Colonic mucosa (tissue), 4 donors: ENCODE measurements at regions of chr11 and their contacts with region 1.

Region 1: GRCh38 chr11:126268708-126269579 is at the starts of genes FOXRED1 and SRPRA:
- DNase-seq: peak; percentile 100
- H3K4me3 ChIP-seq: peak within 1 kb of the TSS; percentile 72
- H3K27ac ChIP-seq: peak within 1 kb of the TSS; percentile 85
- H3K4me1 ChIP-seq: peaks cover 5% of the 10 kb centered on the region
- H3K27me3 ChIP-seq: no peaks in the 10 kb centered on the region
- CTCF ChIP-seq: no peak
- total RNA-seq, gene FOXRED1: 19.9 to 63.4 TPM
- total RNA-seq, gene SRPRA: 75.8 to 102 TPM

Region 2: GRCh38 chr11:125842321-125842948 is 426.5 kb before region 1 on chr11:
- intact Hi-C with region 1: no loop called
- DNase-seq: no peak
- H3K4me3 ChIP-seq: no peak overlapping the region
- H3K27ac ChIP-seq: no peak overlapping the region
- H3K4me1 ChIP-seq: no peaks in the 10 kb centered on the region
- H3K27me3 ChIP-seq: no peaks in the 10 kb centered on the region
- CTCF ChIP-seq: no peak

Region 3: DNA sequence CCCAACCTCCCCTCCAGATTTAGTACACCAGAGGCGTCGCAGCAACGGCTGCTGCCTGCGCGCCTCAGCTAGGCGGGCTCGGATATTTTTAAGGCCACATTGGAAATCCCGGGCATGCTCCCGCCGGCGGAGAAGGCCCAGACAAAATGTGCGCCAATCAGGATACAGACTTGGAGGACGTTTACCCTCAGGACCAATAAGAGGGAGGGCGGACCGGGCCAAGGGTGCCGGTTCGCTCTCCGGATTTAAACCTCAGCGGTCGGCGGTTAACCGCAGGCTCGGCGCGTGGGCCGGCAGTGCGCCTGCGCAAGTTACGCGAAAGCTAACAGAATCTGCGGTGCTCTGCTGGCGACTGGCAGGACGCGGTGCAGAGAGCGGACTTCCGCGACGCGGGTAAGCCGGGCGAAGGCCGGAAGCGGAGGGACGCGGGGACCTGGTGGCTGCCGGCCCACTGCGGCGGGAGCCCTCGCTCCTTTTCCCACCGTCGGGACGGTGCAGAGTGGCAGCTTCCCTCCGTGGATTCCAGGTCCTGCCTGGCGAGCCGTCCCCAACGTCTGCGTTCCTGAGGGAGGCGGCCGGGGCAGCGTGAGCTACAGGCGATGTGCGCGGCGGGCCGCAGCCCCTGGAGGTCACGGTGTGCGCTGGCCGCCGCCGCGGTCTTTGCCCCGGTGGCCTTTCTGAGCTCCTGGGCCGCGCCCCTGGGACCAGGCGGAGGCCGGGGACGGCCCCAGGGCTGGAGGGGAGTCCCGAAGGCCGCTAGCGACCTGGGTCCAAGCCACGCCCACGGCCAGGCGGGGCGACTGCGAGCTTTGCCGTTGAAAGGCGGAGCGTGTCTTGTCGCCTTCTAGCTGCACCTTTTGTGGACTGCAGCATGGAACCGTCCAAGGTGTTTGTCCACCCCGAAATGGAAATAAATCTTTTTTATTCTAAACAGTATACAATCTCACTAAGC is 381.3 kb before region 1 on chr11 and contains the start of gene HYLS1:
- intact Hi-C with region 1: no loop called
- DNase-seq: peak; percentile 93
- H3K4me3 ChIP-seq: peak within 1 kb of the TSS; percentile 76
- H3K27ac ChIP-seq: peak within 1 kb of the TSS; percentile 88
- H3K4me1 ChIP-seq: no peaks in the 10 kb centered on the region
- H3K27me3 ChIP-seq: no peaks in the 10 kb centered on the region
- CTCF ChIP-seq: no peak
- total RNA-seq, gene HYLS1: 5.6 to 8.2 TPM

Region 4: GRCh38 chr11:126034039-126034932 is 234.7 kb before region 1 on chr11:
- intact Hi-C with region 1: no loop called
- DNase-seq: no peak
- H3K4me3 ChIP-seq: no peak overlapping the region
- H3K27ac ChIP-seq: no peak overlapping the region
- H3K4me1 ChIP-seq: no peaks in the 10 kb centered on the region
- H3K27me3 ChIP-seq: no peaks in the 10 kb centered on the region
- CTCF ChIP-seq: no peak

Region 5: DNA sequence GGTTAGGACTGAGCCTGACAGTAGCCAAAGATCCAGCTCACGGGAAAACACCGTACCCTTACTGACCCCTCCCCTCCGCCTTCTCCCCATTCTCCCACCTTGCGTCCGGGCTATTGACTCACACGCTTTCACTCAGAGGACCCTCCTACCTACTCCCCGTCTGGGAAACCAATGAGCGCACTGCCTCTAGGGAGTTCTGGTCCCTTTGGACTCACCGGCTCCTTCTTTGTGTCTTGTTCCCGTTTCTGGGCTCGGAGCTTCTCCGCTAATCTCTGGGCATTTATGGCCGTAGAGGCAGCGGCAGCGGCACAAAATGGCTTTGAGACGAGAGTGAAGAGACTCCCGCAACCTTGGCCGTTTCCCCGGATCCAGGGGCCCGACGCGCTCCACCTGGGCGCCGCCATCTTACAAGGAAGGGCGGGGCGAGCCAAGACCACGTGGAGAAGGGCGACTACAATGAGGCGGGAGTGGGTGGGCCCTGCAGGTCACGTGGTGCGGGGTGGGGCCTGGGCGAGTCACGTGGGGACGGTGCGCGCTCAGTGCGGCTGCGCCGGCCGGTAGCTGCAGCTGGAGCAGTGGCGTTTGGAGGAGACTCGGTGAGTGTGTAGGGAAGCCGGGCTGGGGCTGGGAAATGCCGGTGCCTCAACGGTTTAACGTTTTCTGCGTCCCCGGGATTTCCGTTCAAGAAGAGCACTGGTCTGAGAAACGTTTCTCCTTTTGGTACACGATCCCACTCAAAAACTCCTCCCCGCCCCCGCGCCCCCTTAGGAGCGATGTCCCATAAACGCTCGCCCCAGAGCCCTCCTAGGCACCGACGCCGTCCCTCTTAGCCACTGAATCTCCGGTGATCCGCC is 57.5 kb before region 1 on chr11 and contains the starts of genes FAM118B and RPUSD4:
- intact Hi-C with region 1: loop called (anchors 5 kb)
- DNase-seq: peak; percentile 99
- H3K4me3 ChIP-seq: peak within 1 kb of the TSS; percentile 88
- H3K27ac ChIP-seq: peak within 1 kb of the TSS; percentile 70
- H3K4me1 ChIP-seq: peaks cover 3% of the 10 kb centered on the region
- H3K27me3 ChIP-seq: no peaks in the 10 kb centered on the region
- CTCF ChIP-seq: no peak
- total RNA-seq, gene FAM118B: 57.9 to 58.3 TPM
- total RNA-seq, gene RPUSD4: 14.4 to 25.1 TPM